ENCODE measurements at regions of chr9 and their contacts with region 1.

Region 1: GRCh38 chr9:114911167-114911821 is 19.1 kb downstream of the TNFSF8 start:
- DNase-seq: peak in 1 of 10 donors; percentile 43
- H3K4me3 ChIP-seq: no peak overlapping the region
- H3K27ac ChIP-seq: no peak overlapping the region
- H3K27me3 ChIP-seq: no peaks in the 10 kb centered on the region
- CTCF ChIP-seq: peak; percentile 42 to 83 (median 72)

Region 2: DNA sequence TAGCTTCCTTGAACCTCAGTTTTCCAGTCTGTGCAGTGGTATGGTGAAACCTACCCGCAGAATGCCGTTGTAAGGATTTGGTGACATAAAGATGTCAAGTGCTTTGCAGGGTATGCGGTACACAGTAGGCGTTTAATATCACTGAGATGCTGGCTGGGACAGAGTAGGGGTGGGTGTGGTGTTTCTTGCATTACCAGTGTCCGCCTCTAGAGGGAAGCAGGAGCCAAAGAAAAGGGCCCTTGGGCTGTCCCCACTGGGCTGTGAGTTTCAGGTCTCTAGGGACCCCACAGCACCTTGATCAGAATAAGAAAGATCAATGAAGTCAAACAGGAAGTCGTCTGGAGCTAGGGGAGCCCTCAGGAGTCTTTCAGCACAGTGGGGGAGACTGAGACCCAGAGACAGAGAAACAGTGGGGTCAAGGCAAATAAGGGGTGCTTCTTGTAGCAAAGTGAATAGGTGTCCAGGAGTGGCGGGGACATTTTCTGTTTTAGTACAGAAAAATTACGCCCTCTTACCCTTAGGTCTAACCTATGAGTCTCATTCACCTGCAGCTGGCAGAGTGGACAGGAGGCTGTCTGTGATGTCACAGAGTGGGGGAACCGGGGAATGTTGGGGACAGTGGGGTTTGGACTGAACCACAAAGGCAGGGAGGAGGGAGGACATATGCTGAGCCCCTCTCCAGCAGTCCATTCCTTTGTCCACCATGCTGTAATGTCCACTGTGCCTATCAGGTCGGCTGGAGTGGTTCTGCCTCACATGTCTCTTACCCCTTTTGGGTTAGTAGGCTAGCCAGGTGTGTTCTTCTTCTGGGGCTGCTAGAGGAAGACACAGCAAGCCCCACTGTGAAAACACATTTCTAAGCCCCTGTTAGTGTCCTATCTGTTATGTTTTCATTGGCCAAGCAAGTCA is 249.0 kb before region 1 on chr9:
- intact Hi-C with region 1: loop called in 1 of 2 experiments (anchors 5 kb)
- DNase-seq: peak in 6 of 10 donors; percentile 4 to 56 (median 42)
- H3K4me3 ChIP-seq: no peak overlapping the region
- H3K27ac ChIP-seq: no peak overlapping the region
- H3K27me3 ChIP-seq: peaks cover 0 to 3% (median 0%) of the 10 kb centered on the region in 45 donors
- CTCF ChIP-seq: peak; percentile 42 to 89 (median 80)

Region 3: GRCh38 chr9:114681594-114682332 is 229.5 kb before region 1 on chr9 and contains the start of gene TEX48:
- intact Hi-C with region 1: loop called (anchors 1 to 5 kb)
- DNase-seq: peak in 6 of 10 donors; percentile 5 to 64 (median 55)
- H3K4me3 ChIP-seq: no peak within 1 kb of the TSS
- H3K27ac ChIP-seq: no peak within 1 kb of the TSS
- H3K27me3 ChIP-seq: no peaks in the 10 kb centered on the region
- CTCF ChIP-seq: peak in 54 of 56 donors; percentile 15 to 71 (median 56)
- total RNA-seq, gene TEX48: not detected

Region 4: GRCh38 chr9:114738581-114739316 is 172.5 kb before region 1 on chr9:
- intact Hi-C with region 1: loop called (anchors 2 to 5 kb)
- DNase-seq: peak in 7 of 10 donors; percentile 18 to 72 (median 55)
- H3K4me3 ChIP-seq: no peak overlapping the region
- H3K27ac ChIP-seq: no peak overlapping the region
- H3K27me3 ChIP-seq: peaks cover 0 to 3% (median 0%) of the 10 kb centered on the region in 45 donors
- CTCF ChIP-seq: peak; percentile 64 to 93 (median 82)

Region 5: DNA sequence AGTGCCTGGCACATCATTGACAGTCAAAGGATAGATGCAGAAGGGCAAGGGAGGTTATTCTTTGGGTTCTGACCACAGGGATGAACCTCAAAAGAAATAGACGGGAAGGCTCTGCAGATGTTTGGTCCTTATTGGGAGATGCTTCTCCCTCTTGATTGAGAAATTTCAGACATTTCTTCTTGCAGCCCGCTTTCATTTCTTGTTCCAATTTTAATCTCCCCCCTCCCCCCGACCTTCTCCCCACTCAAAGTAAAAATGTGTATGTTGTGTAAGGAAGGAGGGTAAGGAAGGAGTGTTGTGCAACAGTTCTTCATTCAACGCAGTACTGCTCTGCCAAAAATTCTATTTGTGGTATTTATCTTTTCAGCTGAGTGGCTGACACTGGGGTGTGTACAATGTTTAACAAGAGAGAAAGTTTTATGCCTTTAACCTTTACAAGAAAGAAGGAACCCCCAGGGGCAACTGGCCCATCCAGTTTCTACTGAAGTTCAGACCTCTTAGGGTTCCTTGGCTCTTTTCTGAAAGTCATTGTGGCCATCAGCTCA is 59.2 kb before region 1 on chr9:
- intact Hi-C with region 1: loop called in 1 of 2 experiments (anchors 10 kb)
- DNase-seq: no peak
- H3K4me3 ChIP-seq: no peak overlapping the region
- H3K27ac ChIP-seq: no peak overlapping the region
- H3K27me3 ChIP-seq: no peaks in the 10 kb centered on the region
- CTCF ChIP-seq: no peak

Region 6: GRCh38 chr9:114884787-114885452 is 26.4 kb before region 1 on chr9:
- intact Hi-C with region 1: no loop called
- DNase-seq: no peak
- H3K4me3 ChIP-seq: no peak overlapping the region
- H3K27ac ChIP-seq: no peak overlapping the region
- H3K27me3 ChIP-seq: peaks cover 0 to 2% (median 0%) of the 10 kb centered on the region in 45 donors
- CTCF ChIP-seq: no peak

Measured in dorsolateral prefrontal cortex (tissue), 120 donors.